ENCODE measurements at regions of chr14 and their contacts with region 1.

Region 1: GRCh38 chr14:75831458-75831857 is 150.3 kb downstream of the TGFB3 start:
- DNase-seq: peak; percentile 93
- H3K4me3 ChIP-seq: no peak overlapping the region
- CTCF ChIP-seq: no peak

Region 2: DNA sequence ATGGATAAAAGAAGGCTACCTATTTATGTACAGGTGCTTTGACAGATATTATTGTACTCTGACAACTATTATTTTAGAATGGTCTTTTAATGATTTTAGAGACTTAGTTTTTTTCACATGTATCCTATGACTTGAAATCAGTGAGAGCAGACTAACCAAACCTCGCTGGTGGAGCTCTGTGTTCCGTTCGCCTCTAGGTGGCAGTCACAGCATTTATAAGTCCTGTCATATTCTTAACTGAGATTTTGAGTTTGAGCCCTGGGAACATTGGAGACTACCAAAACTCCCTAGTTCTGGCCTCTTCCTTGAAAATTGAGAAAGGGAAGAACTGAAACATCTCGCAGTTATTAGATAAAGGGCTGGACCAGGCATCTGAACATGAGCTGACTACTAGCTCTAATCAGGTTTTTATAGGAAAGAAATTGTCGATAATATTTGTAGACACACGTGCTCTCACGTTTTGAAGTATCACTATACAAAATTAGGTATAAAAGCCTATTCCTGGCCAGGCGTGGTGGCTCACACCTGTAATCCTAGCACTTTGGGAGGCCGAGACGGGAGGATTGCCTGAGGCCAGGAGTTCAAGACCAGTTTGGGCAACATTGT is 122.1 kb before region 1 on chr14:
- in situ Hi-C with region 1: loop called (anchors 25 kb)
- DNase-seq: peak; percentile 89
- H3K4me3 ChIP-seq: no peak overlapping the region
- CTCF ChIP-seq: peak; percentile 81

Region 3: GRCh38 chr14:75928690-75929181 is 97.3 kb after region 1 on chr14:
- in situ Hi-C with region 1: no loop called
- DNase-seq: no peak
- H3K4me3 ChIP-seq: no peak overlapping the region
- CTCF ChIP-seq: no peak

Measured in astrocyte of the spinal cord (primary cell).